ENCODE measurements at regions of chr12 and their contacts with region 1.

Region 1: DNA sequence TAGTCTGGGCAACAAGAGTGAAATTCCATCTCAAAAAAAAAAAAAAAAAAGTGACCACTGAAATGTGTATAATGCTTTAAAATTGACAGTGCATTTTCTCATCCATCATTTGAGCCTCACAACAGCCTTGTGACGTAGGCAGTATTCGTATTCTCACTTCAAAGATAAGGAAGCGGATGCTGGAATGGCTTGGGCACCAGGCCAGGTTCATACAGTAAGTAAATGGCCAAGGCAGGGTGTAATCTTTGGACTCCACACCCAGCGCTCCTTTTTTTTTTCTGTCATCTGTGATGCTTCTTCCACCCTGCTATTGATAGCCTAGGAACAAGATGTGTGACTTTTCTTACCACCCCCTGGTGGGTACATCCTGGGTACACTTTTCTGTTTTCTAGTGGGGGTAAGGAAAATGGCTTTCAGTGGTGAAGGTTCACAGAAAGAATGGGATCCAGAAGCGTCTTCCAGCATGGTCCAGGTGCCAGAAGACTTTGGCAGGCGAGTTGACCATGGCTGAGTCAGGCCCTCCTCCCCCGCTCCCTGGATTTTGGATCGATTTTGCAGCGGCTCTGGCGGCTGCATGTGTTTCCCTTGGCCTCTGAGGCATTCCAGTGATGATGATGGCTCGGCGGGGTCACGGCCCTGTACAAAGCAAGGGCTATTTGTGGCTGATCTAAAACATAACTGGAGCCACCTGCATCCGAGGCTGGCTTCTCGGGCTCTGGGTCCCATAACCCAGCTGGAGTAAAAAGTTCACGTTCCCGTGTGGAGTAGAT is 110.6 kb downstream of the CACNA1C start:
- DNase-seq: peak; percentile 96

Region 2: DNA sequence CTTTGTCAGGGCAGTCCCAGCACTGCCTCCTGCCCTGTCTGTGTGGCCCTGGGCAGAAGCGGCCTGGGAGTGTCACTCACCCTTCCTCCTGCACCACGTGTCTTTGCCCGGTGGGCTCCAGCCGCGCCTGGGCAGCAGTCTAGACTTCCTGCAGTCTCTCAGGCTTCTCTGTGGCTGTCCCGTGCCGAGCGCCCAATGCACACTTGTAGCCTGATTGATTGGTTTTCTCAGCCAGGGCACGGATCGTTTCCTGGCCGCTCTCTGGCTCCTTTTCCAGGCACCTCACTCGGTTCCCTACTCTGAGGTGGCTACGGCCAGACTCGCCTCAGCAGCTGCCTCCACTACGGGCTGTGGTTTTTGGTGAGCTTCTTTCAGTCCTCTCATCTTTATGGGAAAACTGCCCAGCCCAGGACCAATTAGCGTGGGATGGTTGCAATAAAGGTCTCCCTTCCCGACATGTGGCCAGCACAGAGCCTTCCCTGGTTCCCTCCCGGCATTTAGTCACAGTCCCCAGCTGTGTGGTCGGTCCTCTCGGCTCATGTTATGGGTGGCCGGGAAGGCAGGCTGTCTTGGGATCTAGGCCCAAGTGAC is 22.5 kb after region 1 on chr12:
- intact Hi-C with region 1: loop called in 1 of 2 experiments (anchors 1 kb)
- DNase-seq: no peak